Right cardiac atrium (tissue), 5 donors: ENCODE measurements at regions of chr12 and their contacts with region 1.

Region 1: GRCh38 chr12:1262011-1262410 is 271.0 kb downstream of the ERC1 start:
- DNase-seq: no peak
- ATAC-seq: no peak
- H3K4me3 ChIP-seq: no peak overlapping the region
- H3K27ac ChIP-seq: no peak overlapping the region
- H3K4me1 ChIP-seq: no peaks in the 10 kb centered on the region
- H3K27me3 ChIP-seq: no peaks in the 10 kb centered on the region

Region 2: GRCh38 chr12:1197264-1198018 is 64.6 kb before region 1 on chr12:
- intact Hi-C with region 1: no loop called
- DNase-seq: no peak
- ATAC-seq: no peak
- H3K4me3 ChIP-seq: no peak overlapping the region
- H3K27ac ChIP-seq: no peak overlapping the region
- H3K4me1 ChIP-seq: no peaks in the 10 kb centered on the region
- H3K27me3 ChIP-seq: no peaks in the 10 kb centered on the region

Region 3: GRCh38 chr12:1212526-1212925 is 49.5 kb before region 1 on chr12:
- intact Hi-C with region 1: loop called in 1 of 4 experiments (anchors 2 kb)
- DNase-seq: no peak
- ATAC-seq: peak in 1 of 2 donors; percentile 30
- H3K4me3 ChIP-seq: no peak overlapping the region
- H3K27ac ChIP-seq: no peak overlapping the region
- H3K4me1 ChIP-seq: no peaks in the 10 kb centered on the region
- H3K27me3 ChIP-seq: no peaks in the 10 kb centered on the region